HEK293 (cell line): ENCODE measurements at regions of chr2 and their contacts with region 1.

Region 1: DNA sequence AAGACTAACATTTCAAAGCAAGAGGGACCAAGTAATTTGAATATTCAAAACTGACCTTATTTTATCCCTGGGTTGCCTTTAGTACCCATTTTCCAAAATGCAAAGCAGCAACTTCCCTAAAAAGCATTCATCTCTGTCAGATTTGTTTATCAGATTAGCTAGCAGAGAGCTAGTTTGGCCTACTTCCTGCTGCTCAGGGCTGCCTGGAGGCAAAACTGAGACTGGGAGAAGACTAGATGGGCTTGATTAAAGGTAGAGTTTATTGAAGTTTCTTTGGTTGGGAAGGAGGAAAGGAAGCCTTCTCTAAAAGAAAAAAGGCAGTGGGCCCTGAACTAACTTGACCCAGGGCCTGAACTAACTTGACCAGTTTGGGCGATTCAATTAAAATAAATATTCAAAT is 426.1 kb upstream of the FAM98A start:
- H3K4me3 ChIP-seq: no peak overlapping the region
- H3K27ac ChIP-seq: no peak overlapping the region
- H3K4me1 ChIP-seq: no peaks in the 10 kb centered on the region
- CTCF ChIP-seq: no peak

Region 2: GRCh38 chr2:33958591-33958990 is 66.6 kb before region 1 on chr2:
- CTCF ChIA-PET with region 1: no interaction called
- POLR2A ChIA-PET with region 1: no interaction called
- H3K4me3 ChIP-seq: no peak overlapping the region
- H3K27ac ChIP-seq: no peak overlapping the region
- H3K4me1 ChIP-seq: no peaks in the 10 kb centered on the region
- CTCF ChIP-seq: no peak

Region 3: DNA sequence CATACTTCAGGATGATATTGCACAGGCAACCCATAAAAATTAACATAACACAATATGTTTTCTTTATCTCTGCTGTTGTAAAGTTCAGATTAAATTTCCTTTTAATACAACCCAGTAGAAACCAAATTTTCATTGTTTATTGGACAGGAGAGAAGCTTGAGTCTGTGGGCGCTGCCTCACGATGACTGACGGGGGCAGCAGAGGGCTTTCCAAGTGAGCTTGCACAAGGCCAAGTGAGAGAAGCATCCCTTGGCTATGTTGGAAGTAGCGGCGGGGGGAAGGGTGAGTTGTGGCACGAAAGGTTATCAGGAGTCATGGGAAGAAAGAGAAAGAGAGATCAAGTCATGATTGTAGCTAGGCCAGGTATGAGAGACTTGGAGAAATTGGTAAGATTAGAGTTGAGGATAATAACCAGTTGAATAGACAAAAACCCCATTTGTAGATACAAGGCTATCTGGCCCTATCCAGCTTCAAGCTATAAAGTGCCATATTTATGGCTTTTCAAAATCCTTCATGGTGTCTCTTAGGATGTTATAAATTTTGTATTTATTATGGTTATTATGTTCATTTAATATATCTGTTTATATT is 12.4 kb before region 1 on chr2:
- CTCF ChIA-PET with region 1: interaction called, 28 read pairs
- POLR2A ChIA-PET with region 1: no interaction called
- H3K4me3 ChIP-seq: no peak overlapping the region
- H3K27ac ChIP-seq: no peak overlapping the region
- H3K4me1 ChIP-seq: no peaks in the 10 kb centered on the region
- CTCF ChIP-seq: peak; percentile 62

Region 4: DNA sequence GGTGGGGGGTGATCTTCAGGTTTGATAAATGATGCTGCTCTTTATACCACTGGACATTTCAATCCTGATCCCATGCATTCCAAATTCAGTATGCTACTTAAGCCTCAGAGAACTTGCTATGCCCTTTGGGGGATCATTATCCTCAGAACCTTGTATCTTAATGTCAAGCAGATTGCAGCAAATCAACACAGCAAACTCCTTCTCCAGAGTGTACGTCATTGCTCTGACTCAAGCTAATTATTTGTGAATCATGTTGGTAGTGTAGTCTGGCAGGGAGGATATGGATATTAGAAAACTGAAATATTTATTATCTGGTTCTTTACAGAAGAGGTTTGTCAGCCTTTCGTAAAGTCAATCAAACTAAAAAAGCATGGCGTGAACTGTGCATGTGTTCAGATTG is 136.4 kb after region 1 on chr2:
- CTCF ChIA-PET with region 1: no interaction called
- POLR2A ChIA-PET with region 1: no interaction called
- H3K4me3 ChIP-seq: no peak overlapping the region
- H3K27ac ChIP-seq: no peak overlapping the region
- H3K4me1 ChIP-seq: no peaks in the 10 kb centered on the region
- CTCF ChIP-seq: no peak